PC-9 (cell line): ENCODE measurements at regions of chr7 and their contacts with region 1.

Region 1: DNA sequence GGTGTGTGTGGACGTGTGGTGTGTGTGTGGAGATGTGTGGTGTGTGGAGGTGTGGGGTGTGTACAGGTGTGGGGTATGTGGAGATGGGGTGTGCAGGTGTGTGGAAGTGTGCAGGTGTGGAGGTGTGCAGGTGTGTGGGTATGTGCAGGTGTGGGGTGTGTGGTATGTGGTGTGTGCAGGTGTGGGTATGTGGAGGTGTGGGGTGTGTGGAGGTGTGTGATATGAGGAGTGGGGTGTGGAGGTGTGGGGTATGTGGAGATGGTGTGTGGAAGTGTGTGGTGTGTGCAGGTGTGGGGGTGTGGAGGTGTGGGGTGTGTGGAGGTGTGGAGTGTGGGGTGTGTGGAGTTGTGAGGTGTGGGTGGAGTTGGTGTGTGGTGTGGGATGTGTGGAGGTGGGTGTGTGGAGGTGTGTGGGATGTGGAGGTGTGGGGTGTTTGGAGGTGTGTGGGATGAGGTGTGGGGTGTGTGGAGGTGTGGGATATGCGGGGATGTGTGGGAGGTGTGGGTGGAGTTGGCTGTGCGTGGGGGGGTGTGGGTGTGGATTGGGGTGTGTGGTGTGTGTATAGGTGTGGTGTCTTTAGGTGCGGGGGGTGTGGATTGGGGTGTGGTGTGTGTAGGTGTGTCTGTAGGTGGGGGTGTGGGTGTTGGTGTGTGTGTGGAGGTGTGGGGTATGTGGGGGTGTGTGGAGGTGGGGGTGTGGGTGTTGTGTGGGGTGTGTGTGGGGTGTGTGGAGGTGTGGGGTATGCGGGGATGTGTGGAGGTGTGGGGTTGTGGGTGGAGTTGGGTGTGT is 34.2 kb downstream of the SPDYE17 start:
- DNase-seq: no peak
- H3K4me3 ChIP-seq: no peak overlapping the region
- H3K27ac ChIP-seq: no peak overlapping the region
- H3K4me1 ChIP-seq: peaks cover 22% of the 10 kb centered on the region
- H3K27me3 ChIP-seq: no peaks in the 10 kb centered on the region
- CTCF ChIP-seq: no peak

Region 2: GRCh38 chr7:76509931-76510877 is 487.8 kb before region 1 on chr7 and contains the start of gene UPK3B:
- CTCF ChIA-PET with region 1: no interaction called
- POLR2A ChIA-PET with region 1: no interaction called
- intact Hi-C with region 1: loop called (anchors 2 kb)
- DNase-seq: peak; percentile 85 to 95
- H3K4me3 ChIP-seq: peak within 1 kb of the TSS; percentile 44
- H3K27ac ChIP-seq: peak within 1 kb of the TSS; percentile 48
- H3K4me1 ChIP-seq: peaks cover 28% of the 10 kb centered on the region
- H3K27me3 ChIP-seq: no peaks in the 10 kb centered on the region
- CTCF ChIP-seq: no peak; the same call in 1 of the 2 replicates
- total RNA-seq, gene UPK3B: 16.8 and 19.2 TPM in 2 replicates

Region 3: GRCh38 chr7:77247206-77247850 is 249.3 kb after region 1 on chr7:
- CTCF ChIA-PET with region 1: no interaction called
- POLR2A ChIA-PET with region 1: no interaction called
- intact Hi-C with region 1: no loop called
- DNase-seq: peak; percentile 61 to 70
- H3K4me3 ChIP-seq: no peak overlapping the region
- H3K27ac ChIP-seq: no peak overlapping the region
- H3K4me1 ChIP-seq: no peaks in the 10 kb centered on the region
- H3K27me3 ChIP-seq: no peaks in the 10 kb centered on the region
- CTCF ChIP-seq: peak; percentile 94